SK-N-SH (cell line): ENCODE measurements at regions of chr9 and their contacts with region 1.

Region 1: GRCh38 chr9:20941174-20941690 is 90.2 kb downstream of the HACD4 start:
- DNase-seq: peak; percentile 63
- H3K4me3 ChIP-seq: peak overlapping the region in 1 of 2 experiments; percentile 27; a peak in 1 of 4 replicates
- H3K27ac ChIP-seq: no peak overlapping the region
- H3K4me1 ChIP-seq: no peaks in the 10 kb centered on the region
- H3K27me3 ChIP-seq: no peaks in the 10 kb centered on the region
- CTCF ChIP-seq: peak; percentile 93
- EP300 ChIP-seq: no peak
- RAD21 ChIP-seq: peak; percentile 97

Region 2: GRCh38 chr9:20356403-20357035 is 584.7 kb before region 1 on chr9:
- CTCF ChIA-PET with region 1: interaction called, 16 read pairs
- POLR2A ChIA-PET with region 1: no interaction called
- DNase-seq: peak; percentile 68
- H3K4me3 ChIP-seq: peak overlapping the region in 1 of 2 experiments; percentile 32; a peak in 1 of 4 replicates
- H3K27ac ChIP-seq: peak overlapping the region in 1 of 2 experiments; percentile 40; a peak in 1 of 4 replicates
- H3K4me1 ChIP-seq: peaks cover 15 to 19% of the 10 kb centered on the region in 2 experiments
- H3K27me3 ChIP-seq: no peaks in the 10 kb centered on the region
- CTCF ChIP-seq: peak; percentile 91
- EP300 ChIP-seq: no peak
- RAD21 ChIP-seq: peak; percentile 98

Region 3: GRCh38 chr9:20490246-20490834 is 450.9 kb before region 1 on chr9:
- CTCF ChIA-PET with region 1: no interaction called
- POLR2A ChIA-PET with region 1: no interaction called
- DNase-seq: no peak
- H3K4me3 ChIP-seq: no peak overlapping the region
- H3K27ac ChIP-seq: no peak overlapping the region
- H3K4me1 ChIP-seq: peaks cover 0 to 4% of the 10 kb centered on the region in 2 experiments; a peak in 2 of 4 replicates
- H3K27me3 ChIP-seq: no peaks in the 10 kb centered on the region
- CTCF ChIP-seq: no peak
- EP300 ChIP-seq: no peak
- RAD21 ChIP-seq: no peak

Region 4: GRCh38 chr9:20622330-20623020 is 318.8 kb before region 1 on chr9 and contains the start of gene MLLT3:
- CTCF ChIA-PET with region 1: interaction called, 107 read pairs
- POLR2A ChIA-PET with region 1: no interaction called
- DNase-seq: peak; percentile 96
- H3K4me3 ChIP-seq: peak within 1 kb of the TSS; percentile 81 to 100
- H3K27ac ChIP-seq: peak within 1 kb of the TSS; percentile 79 to 90
- H3K4me1 ChIP-seq: peaks cover 6 to 8% of the 10 kb centered on the region in 2 experiments; a peak in 3 of 4 replicates
- H3K27me3 ChIP-seq: no peaks in the 10 kb centered on the region
- CTCF ChIP-seq: no peak
- EP300 ChIP-seq: no peak
- RAD21 ChIP-seq: 0 out of 2 replicates have a peak, but pooled peaks have one; percentile 4
- polyA plus RNA-seq, gene MLLT3: 3.9 and 6.2 TPM in 2 replicates

Region 5: DNA sequence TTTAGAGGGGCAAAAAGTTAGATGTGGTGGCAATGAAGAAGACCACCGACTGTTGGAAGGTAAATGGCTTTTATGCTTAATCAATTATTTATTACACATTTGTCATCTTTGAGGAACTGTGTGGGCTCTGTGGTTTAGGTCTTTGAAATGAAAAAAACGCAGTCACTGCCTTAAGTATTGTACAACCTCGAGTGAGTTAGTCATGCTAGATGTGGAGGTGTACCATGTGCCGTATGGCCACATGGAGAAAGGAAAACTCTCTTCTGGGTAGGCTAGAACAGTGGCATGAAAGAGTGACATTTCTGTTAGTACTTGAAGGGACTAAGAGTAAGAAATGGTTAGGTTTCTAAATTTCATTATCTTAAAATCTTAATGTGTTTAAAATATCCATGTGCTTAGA is 75.9 kb before region 1 on chr9:
- CTCF ChIA-PET with region 1: no interaction called
- POLR2A ChIA-PET with region 1: no interaction called
- DNase-seq: no peak
- H3K4me3 ChIP-seq: no peak overlapping the region
- H3K27ac ChIP-seq: no peak overlapping the region
- H3K4me1 ChIP-seq: no peaks in the 10 kb centered on the region
- H3K27me3 ChIP-seq: no peaks in the 10 kb centered on the region
- CTCF ChIP-seq: no peak
- EP300 ChIP-seq: no peak
- RAD21 ChIP-seq: no peak

Region 6: GRCh38 chr9:20930836-20931235 is 10.4 kb before region 1 on chr9:
- CTCF ChIA-PET with region 1: interaction called, 16 read pairs
- POLR2A ChIA-PET with region 1: no interaction called
- DNase-seq: no peak
- H3K4me3 ChIP-seq: no peak overlapping the region
- H3K27ac ChIP-seq: no peak overlapping the region
- H3K4me1 ChIP-seq: no peaks in the 10 kb centered on the region
- H3K27me3 ChIP-seq: no peaks in the 10 kb centered on the region
- CTCF ChIP-seq: no peak
- EP300 ChIP-seq: no peak
- RAD21 ChIP-seq: no peak

Region 7: DNA sequence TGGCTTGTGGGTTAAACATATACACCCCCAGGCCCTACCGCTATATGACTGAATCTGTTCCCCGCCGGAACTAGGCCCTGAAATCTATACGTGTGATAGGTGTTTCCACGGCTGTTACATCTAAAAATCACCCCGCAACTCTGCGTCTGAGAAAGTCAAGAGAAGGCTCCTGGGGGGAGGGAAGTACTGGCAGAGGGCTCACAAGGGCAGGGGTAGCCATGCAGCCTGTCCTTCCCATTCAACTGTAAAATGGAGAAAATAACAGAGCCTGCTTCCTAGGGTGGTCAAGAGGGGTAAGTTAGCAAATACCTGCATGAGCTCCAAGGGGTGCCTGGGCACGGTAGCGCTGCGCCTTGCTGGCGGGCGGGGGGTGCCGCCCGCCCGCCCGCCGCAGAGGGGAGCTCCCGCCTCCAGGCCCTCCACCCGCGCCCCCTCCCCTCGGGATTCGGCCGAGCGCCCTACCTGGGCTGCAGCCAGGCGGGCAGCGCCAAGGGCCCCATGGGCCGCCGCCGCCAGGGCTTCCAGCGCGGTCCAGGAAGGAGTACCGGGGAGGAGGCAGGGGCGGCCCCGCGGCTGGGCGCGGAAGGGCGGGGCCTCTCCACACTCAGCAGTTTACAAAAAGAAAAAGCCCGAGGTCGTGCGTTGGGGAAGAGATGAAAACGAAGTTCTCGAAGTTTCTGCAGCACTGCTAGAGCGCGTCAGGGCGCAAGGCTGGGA is 90.0 kb after region 1 on chr9 and contains the start of gene HACD4:
- CTCF ChIA-PET with region 1: no interaction called
- POLR2A ChIA-PET with region 1: no interaction called
- DNase-seq: peak; percentile 68
- H3K4me3 ChIP-seq: peak within 1 kb of the TSS in 1 of 2 experiments; percentile 6; a peak in 1 of 4 replicates
- H3K27ac ChIP-seq: no peak within 1 kb of the TSS
- H3K4me1 ChIP-seq: 0 out of 4 replicates have a peak, but pooled peaks cover 0 to 5% of the 10 kb centered on the region in 2 experiments
- H3K27me3 ChIP-seq: no peaks in the 10 kb centered on the region
- CTCF ChIP-seq: no peak
- EP300 ChIP-seq: no peak
- RAD21 ChIP-seq: no peak
- polyA plus RNA-seq, gene HACD4: under 0.01 TPM in 1 of 2 replicates, not detected in the other

Region 8: DNA sequence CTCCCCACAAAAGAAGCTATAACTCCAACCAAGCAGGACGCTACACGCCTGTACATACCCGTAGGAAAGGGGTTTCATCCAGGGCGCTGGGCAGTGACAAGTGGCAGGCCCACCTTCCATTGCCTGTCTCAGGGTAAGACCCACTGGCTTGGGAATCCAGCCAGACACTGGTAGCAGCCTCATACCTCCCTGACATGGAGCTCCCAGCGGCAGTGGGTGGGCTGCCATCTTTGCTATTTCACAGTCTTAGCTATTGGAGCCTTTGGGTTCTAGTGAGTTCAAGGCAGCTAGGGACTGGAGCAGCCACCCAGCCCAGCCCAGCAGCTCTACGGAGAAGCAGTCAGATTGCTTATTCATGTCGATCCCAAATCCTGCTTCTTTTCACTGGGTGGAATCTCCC is 269.1 kb after region 1 on chr9:
- CTCF ChIA-PET with region 1: no interaction called
- POLR2A ChIA-PET with region 1: no interaction called
- DNase-seq: no peak
- H3K4me3 ChIP-seq: no peak overlapping the region
- H3K27ac ChIP-seq: no peak overlapping the region
- H3K4me1 ChIP-seq: no peaks in the 10 kb centered on the region
- H3K27me3 ChIP-seq: no peaks in the 10 kb centered on the region; the same call in 1 of the 2 replicates
- CTCF ChIP-seq: no peak
- EP300 ChIP-seq: no peak
- RAD21 ChIP-seq: no peak